ENCODE measurements at regions of chr13 and their contacts with region 1.

Region 1: DNA sequence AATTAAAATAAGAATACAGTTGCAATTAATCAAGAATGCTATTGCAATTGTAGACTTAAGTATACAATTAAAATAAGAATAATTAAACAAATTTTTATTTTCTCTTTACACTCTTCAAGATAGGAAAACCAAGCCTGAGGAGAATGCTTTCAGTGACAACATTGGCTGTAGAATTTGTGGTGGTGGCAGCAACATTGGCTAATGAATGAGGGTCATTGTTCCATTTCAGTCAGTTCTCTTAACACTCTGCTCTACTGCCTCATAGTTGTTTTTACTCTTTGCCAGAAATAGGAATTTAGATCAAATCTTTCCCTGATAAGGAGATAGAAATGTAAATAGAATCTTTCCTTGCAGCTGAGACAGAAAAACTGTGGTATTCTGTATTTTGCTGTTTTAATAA is 391.6 kb downstream of the PCDH20 start:
- DNase-seq: no peak
- ATAC-seq: no peak
- H3K4me3 ChIP-seq: no peak overlapping the region
- H3K27ac ChIP-seq: no peak overlapping the region
- H3K4me1 ChIP-seq: no peaks in the 10 kb centered on the region
- H3K27me3 ChIP-seq: no peaks in the 10 kb centered on the region
- CTCF ChIP-seq: no peak

Region 2: GRCh38 chr13:60417734-60418133 is 606.3 kb before region 1 on chr13:
- intact Hi-C with region 1: no loop called
- DNase-seq: no peak
- ATAC-seq: no peak
- H3K4me3 ChIP-seq: no peak overlapping the region
- H3K27ac ChIP-seq: no peak overlapping the region
- H3K4me1 ChIP-seq: peaks cover 22% of the 10 kb centered on the region
- H3K27me3 ChIP-seq: no peaks in the 10 kb centered on the region
- CTCF ChIP-seq: no peak

Region 3: DNA sequence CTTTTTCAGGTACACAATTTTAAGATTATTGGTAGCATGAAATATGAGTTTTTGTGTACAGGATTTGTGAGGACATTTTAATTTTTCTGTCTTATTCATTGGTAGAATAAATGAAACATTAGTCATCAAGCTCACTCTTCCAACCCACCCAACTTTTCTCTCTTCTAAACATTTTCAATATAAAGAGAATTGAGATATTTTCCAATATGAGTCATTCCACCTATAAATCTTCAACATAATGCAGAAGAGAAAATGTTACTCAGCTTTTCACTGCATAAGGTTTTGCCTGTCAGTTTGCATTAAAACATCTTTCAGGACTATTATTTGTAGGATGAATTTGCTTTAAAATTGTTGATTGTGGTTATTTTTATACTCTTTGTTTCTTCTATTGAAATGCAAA is 60.9 kb after region 1 on chr13:
- intact Hi-C with region 1: loop called in 1 of 2 experiments (anchors 2 kb)
- DNase-seq: no peak
- ATAC-seq: no peak
- H3K4me3 ChIP-seq: no peak overlapping the region
- H3K27ac ChIP-seq: no peak overlapping the region
- H3K4me1 ChIP-seq: no peaks in the 10 kb centered on the region
- H3K27me3 ChIP-seq: no peaks in the 10 kb centered on the region
- CTCF ChIP-seq: no peak